ENCODE measurements at regions of chr22 and their contacts with region 1.

Region 1: GRCh38 chr22:50030297-50031188 is 18.0 kb upstream of the IL17REL start:
- DNase-seq: peak; percentile 83 to 85
- ATAC-seq: peak; percentile 88 to 95
- H3K4me3 ChIP-seq: peak overlapping the region; percentile 37; the same call in 2 of the 3 replicates
- H3K27ac ChIP-seq: peak overlapping the region in 1 of 2 experiments; percentile 35; a peak in 1 of 6 replicates
- H3K4me1 ChIP-seq: peaks cover 6% of the 10 kb centered on the region; the same call in 1 of the 3 replicates
- CTCF ChIP-seq: peak; percentile 81
- EP300 ChIP-seq: no peak
- POLR2A ChIP-seq: no peak
- RAD21 ChIP-seq: peak; percentile 86 to 93

Region 2: GRCh38 chr22:49930739-49931412 is 99.7 kb before region 1 on chr22:
- CTCF ChIA-PET with region 1: interaction called, 49 read pairs
- POLR2A ChIA-PET with region 1: interaction called, 7 read pairs
- DNase-seq: peak in 1 of 2 experiments; percentile 77
- ATAC-seq: peak; percentile 60 to 67
- H3K4me3 ChIP-seq: no peak overlapping the region
- H3K27ac ChIP-seq: no peak overlapping the region
- H3K4me1 ChIP-seq: peaks cover 20% of the 10 kb centered on the region
- CTCF ChIP-seq: peak; percentile 37; the same call in 2 of the 3 replicates
- EP300 ChIP-seq: no peak
- POLR2A ChIP-seq: no peak
- RAD21 ChIP-seq: peak; percentile 46 to 76

Region 3: GRCh38 chr22:49951000-49951677 is 79.4 kb before region 1 on chr22:
- CTCF ChIA-PET with region 1: interaction called, 15 read pairs
- POLR2A ChIA-PET with region 1: no interaction called
- DNase-seq: no peak
- ATAC-seq: no peak
- H3K4me3 ChIP-seq: no peak overlapping the region
- H3K27ac ChIP-seq: peak overlapping the region; percentile 91 to 93
- H3K4me1 ChIP-seq: peaks cover 55% of the 10 kb centered on the region
- CTCF ChIP-seq: no peak
- EP300 ChIP-seq: no peak
- POLR2A ChIP-seq: no peak
- RAD21 ChIP-seq: no peak

Region 4: DNA sequence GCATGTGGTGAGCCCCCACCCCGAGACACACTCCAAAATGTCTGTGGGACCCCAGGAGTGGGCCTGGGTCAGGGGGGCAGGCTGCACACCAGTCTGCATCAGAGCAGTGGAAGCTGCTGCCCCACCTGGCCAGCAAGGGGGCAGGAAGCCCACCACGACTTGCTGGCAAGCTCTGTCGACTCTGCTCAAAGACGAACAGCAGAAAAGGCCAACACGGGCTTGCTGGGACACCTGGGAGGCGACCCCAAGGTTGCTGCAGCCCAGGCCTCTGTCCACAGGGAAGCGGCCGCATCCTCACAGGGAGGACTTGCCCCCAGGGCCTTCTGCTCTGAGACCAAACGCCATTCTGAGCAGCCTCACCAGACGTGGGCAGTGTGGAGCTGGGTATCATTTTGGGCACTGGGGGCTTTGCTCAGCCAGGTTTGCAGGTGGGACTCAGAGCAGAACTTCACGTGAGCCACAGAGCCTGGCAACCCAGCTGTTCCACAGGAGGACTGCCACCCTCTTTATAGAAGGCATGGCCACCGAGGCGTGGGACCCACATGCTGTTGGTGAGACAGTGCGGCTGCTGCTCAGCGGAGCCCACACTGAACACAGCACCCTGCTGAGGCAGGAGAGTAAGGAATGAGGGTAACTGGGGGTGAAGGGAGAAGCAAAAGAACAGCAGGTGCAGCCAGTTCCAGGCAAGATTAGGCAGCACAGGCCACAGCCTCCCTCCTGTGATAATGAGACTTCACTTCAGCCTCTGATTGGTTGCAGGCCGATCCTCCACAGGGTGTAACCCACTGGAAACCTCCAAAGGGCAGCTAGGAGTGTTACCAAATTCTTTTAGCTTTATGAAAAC is 28.9 kb before region 1 on chr22:
- CTCF ChIA-PET with region 1: interaction called, 39 read pairs
- POLR2A ChIA-PET with region 1: no interaction called
- DNase-seq: no peak
- ATAC-seq: 0 out of 6 replicates have a peak, but pooled peaks of 1 of the 2 experiments have one; percentile 6
- H3K4me3 ChIP-seq: no peak overlapping the region
- H3K27ac ChIP-seq: no peak overlapping the region
- H3K4me1 ChIP-seq: peaks cover 4% of the 10 kb centered on the region; the same call in 1 of the 3 replicates
- CTCF ChIP-seq: no peak
- EP300 ChIP-seq: no peak
- POLR2A ChIP-seq: no peak
- RAD21 ChIP-seq: no peak

Region 5: DNA sequence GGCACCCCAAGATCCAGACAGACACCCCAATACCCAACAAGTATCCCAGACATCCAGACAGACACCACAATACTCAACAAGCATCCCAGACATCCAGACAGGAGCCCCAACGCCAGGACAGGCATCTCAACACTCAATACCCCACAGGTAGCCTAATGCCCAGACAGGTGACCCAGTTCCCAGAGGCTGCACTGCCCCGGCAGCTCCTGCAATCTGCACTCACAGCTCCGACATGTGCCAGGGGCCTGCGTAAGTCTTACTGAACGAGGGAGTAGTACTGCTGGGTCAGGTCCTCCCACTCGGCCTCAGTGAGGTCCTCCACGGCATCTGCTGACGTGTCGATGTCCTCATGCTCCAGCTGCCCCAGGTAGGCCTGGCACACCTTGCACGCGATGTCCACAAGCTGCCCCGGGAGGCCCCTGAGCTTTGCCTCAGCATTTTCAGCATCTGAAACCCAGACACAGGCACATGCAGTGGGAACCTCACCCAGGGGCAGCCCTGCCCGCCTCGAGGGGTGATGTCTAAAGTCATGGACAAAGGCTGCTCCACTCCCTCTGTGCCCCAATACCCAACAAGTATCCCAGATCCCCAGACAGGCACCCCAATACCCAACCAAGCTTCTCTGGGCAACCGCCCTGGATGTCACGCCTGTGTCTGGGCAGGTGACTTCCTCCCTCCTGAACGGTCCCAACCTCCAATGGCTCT is 11.0 kb after region 1 on chr22:
- CTCF ChIA-PET with region 1: interaction called, 10 read pairs
- POLR2A ChIA-PET with region 1: no interaction called
- DNase-seq: no peak
- ATAC-seq: no peak
- H3K4me3 ChIP-seq: no peak overlapping the region
- H3K27ac ChIP-seq: no peak overlapping the region
- H3K4me1 ChIP-seq: no peaks in the 10 kb centered on the region
- CTCF ChIP-seq: no peak
- EP300 ChIP-seq: no peak
- POLR2A ChIP-seq: no peak
- RAD21 ChIP-seq: no peak